H1 (cell line): ENCODE measurements at regions of chr12 and their contacts with region 1.

Region 1: DNA sequence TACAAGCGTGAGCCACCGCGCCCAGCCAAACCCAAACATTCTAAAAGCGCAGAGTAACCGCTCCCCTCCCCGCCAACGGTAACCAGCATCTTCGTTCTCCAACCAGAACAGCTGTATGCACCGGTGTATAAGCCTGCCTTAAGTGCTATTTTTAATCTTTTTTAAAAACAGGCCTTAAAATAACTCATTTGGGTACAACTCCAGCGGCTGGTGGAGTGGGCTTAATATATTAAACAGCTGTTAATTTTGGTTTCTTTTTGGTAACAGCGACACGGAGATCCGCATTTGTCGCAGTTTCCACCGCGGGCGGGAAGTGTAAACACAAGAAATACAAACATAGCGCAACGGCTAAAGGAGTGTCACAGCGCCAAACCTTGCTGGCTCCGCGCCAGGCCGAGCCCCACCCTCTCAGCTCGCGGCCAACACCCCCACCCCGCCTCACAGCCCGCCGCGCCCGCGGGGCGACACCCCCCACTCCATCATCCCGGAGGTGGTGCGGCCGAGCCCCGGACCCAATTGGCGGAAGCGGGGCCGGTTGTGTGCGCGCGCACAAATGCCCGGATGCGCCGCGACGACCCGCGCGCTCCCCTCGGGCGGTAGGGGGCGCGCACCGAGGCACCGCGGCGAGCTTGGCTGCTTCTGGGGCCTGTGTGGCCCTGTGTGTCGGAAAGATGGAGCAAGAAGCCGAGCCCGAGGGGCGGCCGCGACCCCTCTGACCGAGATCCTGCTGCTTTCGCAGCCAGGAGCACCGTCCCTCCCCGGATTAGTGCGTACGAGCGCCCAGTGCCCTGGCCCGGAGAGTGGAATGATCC is at the start of gene MDM2:
- DNase-seq: peak; percentile 81 to 93
- H3K4me3 ChIP-seq: peak within 1 kb of the TSS; percentile 92 to 97 (median 94)
- H3K27ac ChIP-seq: peak within 1 kb of the TSS; percentile 100
- H3K4me1 ChIP-seq: peaks cover 3 to 12% (median 6%) of the 10 kb centered on the region in 4 experiments; a peak in 5 of 7 replicates
- H3K27me3 ChIP-seq: no peaks in the 10 kb centered on the region
- CTCF ChIP-seq: peak; percentile 53 to 68 (median 61)
- EP300 ChIP-seq: no peak
- POLR2A ChIP-seq: peak; percentile 90
- RAD21 ChIP-seq: peak in 1 of 2 experiments; percentile 28; a peak in 1 of 4 replicates
- total RNA-seq, gene MDM2: 115 and 134 TPM in 2 replicates

Region 2: GRCh38 chr12:68745904-68746571 is 61.7 kb before region 1 on chr12 and contains the start of gene SLC35E3:
- CTCF ChIA-PET with region 1: no interaction called
- POLR2A ChIA-PET with region 1: interaction called, 36 read pairs
- DNase-seq: peak; percentile 77 to 92
- H3K4me3 ChIP-seq: peak within 1 kb of the TSS; percentile 79 to 91 (median 86)
- H3K27ac ChIP-seq: peak within 1 kb of the TSS; percentile 76; the same call in 1 of the 2 replicates
- H3K4me1 ChIP-seq: no peaks in the 10 kb centered on the region; a peak in 2 of 7 replicates
- H3K27me3 ChIP-seq: no peaks in the 10 kb centered on the region
- CTCF ChIP-seq: peak in 1 of 3 experiments; percentile 3; a peak in 1 of 4 replicates
- EP300 ChIP-seq: no peak
- POLR2A ChIP-seq: peak; percentile 60 to 93
- RAD21 ChIP-seq: no peak; a peak in 2 of 4 replicates
- total RNA-seq, gene SLC35E3: 10.0 and 12.9 TPM in 2 replicates

Region 3: DNA sequence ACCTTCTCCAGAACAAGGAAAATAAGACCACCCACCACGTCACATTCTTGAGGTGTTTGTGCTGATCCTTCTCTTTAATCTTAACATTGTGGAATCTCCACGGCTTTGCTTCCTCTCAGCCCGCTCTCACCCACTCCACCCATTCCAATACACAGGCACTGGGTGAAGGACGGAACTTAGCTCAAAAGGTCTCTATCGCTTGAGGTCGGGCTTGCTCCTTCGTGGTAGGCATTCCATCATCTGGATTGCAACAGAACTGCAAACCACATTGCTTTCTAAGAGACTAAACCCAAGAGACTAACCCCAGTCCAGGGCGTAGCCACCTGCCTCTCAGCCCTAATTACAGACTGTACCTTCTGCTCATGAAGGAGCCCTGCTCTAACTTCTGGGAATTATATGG is 23.8 kb before region 1 on chr12:
- CTCF ChIA-PET with region 1: no interaction called
- POLR2A ChIA-PET with region 1: interaction called, 18 read pairs
- DNase-seq: no peak
- H3K4me3 ChIP-seq: no peak overlapping the region
- H3K27ac ChIP-seq: no peak overlapping the region
- H3K4me1 ChIP-seq: peaks cover 0 to 3% (median 0%) of the 10 kb centered on the region in 4 experiments; a peak in 1 of 7 replicates
- H3K27me3 ChIP-seq: no peaks in the 10 kb centered on the region
- CTCF ChIP-seq: no peak
- EP300 ChIP-seq: no peak
- POLR2A ChIP-seq: no peak
- RAD21 ChIP-seq: no peak

Region 4: GRCh38 chr12:68792952-68793835 is 14.6 kb before region 1 on chr12:
- CTCF ChIA-PET with region 1: interaction called, 4 read pairs
- POLR2A ChIA-PET with region 1: interaction called, 14 read pairs
- DNase-seq: peak in 1 of 2 experiments; percentile 53
- H3K4me3 ChIP-seq: no peak overlapping the region
- H3K27ac ChIP-seq: no peak overlapping the region
- H3K4me1 ChIP-seq: peaks cover 0 to 2% (median 0%) of the 10 kb centered on the region in 4 experiments; a peak in 1 of 7 replicates
- H3K27me3 ChIP-seq: no peaks in the 10 kb centered on the region
- CTCF ChIP-seq: no peak
- EP300 ChIP-seq: no peak
- POLR2A ChIP-seq: no peak
- RAD21 ChIP-seq: no peak

Region 5: GRCh38 chr12:68821357-68822188 is 13.8 kb after region 1 on chr12:
- CTCF ChIA-PET with region 1: interaction called, 3 read pairs
- POLR2A ChIA-PET with region 1: interaction called, 41 read pairs
- DNase-seq: no peak
- H3K4me3 ChIP-seq: no peak overlapping the region
- H3K27ac ChIP-seq: no peak overlapping the region
- H3K4me1 ChIP-seq: no peaks in the 10 kb centered on the region
- H3K27me3 ChIP-seq: no peaks in the 10 kb centered on the region
- CTCF ChIP-seq: no peak
- EP300 ChIP-seq: no peak
- POLR2A ChIP-seq: peak in 1 of 2 experiments; percentile 44; a peak in 1 of 3 replicates
- RAD21 ChIP-seq: no peak

Region 6: GRCh38 chr12:68831272-68831671 is 23.5 kb after region 1 on chr12:
- CTCF ChIA-PET with region 1: interaction called, 29 read pairs
- POLR2A ChIA-PET with region 1: interaction called, 26 read pairs
- DNase-seq: no peak
- H3K4me3 ChIP-seq: no peak overlapping the region
- H3K27ac ChIP-seq: no peak overlapping the region
- H3K4me1 ChIP-seq: peaks cover 0 to 7% (median 3%) of the 10 kb centered on the region in 4 experiments; a peak in 2 of 7 replicates
- H3K27me3 ChIP-seq: no peaks in the 10 kb centered on the region
- CTCF ChIP-seq: no peak
- EP300 ChIP-seq: no peak
- POLR2A ChIP-seq: no peak; a peak in 2 of 3 replicates
- RAD21 ChIP-seq: no peak

Region 7: DNA sequence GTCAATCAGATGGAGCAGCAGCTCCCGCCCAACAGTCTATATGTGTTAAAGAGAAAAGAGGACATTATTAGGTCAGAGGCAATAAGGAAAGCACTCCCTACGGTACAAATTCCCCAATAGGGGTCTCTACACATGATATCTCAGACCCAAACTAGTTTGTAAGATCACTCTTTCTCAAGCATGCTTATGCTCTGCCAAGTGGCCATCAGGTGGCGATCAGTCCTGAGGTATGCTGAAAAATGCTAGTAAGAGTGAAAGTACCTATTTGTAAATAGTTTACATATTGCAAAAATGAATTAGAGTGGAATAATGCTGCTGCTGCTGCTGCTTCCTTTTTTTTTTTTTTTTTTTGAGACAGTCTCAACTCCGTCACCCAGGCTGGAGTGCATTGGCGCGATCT is 64.1 kb after region 1 on chr12:
- CTCF ChIA-PET with region 1: no interaction called
- POLR2A ChIA-PET with region 1: no interaction called
- DNase-seq: no peak
- H3K4me3 ChIP-seq: no peak overlapping the region
- H3K27ac ChIP-seq: no peak overlapping the region
- H3K4me1 ChIP-seq: peaks cover 2 to 5% (median 4%) of the 10 kb centered on the region in 4 experiments; a peak in 3 of 7 replicates
- H3K27me3 ChIP-seq: no peaks in the 10 kb centered on the region
- CTCF ChIP-seq: peak in 2 of 3 experiments; percentile 69 to 72; a peak in 3 of 4 replicates
- EP300 ChIP-seq: no peak
- POLR2A ChIP-seq: no peak
- RAD21 ChIP-seq: peak; percentile 80

Region 8: DNA sequence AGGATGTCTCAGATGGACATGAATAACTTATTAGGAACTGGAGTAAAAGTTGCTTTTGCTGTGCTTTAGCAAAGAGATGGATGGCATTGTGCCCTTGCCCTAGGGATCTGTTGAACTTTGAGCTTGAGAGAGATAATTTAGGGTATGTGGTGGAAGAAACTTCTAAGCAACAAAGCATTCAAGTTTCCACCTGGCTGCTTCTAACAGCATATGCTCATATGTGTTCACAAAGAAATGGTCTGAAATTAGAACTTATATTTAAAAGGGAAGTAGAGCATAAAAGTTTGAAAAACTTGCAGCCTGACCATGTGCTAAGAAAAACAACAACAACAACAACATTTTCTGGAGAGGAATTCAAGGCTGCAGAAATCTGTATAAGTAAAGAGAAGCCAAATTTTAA is 423.7 kb after region 1 on chr12:
- CTCF ChIA-PET with region 1: no interaction called
- POLR2A ChIA-PET with region 1: no interaction called
- DNase-seq: no peak
- H3K4me3 ChIP-seq: no peak overlapping the region
- H3K27ac ChIP-seq: no peak overlapping the region
- H3K4me1 ChIP-seq: no peaks in the 10 kb centered on the region
- H3K27me3 ChIP-seq: no peaks in the 10 kb centered on the region
- CTCF ChIP-seq: no peak
- EP300 ChIP-seq: no peak
- POLR2A ChIP-seq: no peak
- RAD21 ChIP-seq: no peak